ENCODE measurements at regions of chr20 and their contacts with region 1.

Region 1: GRCh38 chr20:39081255-39081654 is 119.1 kb downstream of the DHX35 start:
- DNase-seq: peak; percentile 62
- H3K4me3 ChIP-seq: no peak overlapping the region
- H3K27ac ChIP-seq: no peak overlapping the region
- H3K27me3 ChIP-seq: peaks cover 11% of the 10 kb centered on the region
- CTCF ChIP-seq: peak; percentile 97

Region 2: GRCh38 chr20:39070484-39071231 is 10.6 kb before region 1 on chr20:
- CTCF ChIA-PET with region 1: interaction called, 23 read pairs
- POLR2A ChIA-PET with region 1: no interaction called
- DNase-seq: no peak
- H3K4me3 ChIP-seq: no peak overlapping the region
- H3K27ac ChIP-seq: no peak overlapping the region
- H3K27me3 ChIP-seq: no peaks in the 10 kb centered on the region
- CTCF ChIP-seq: no peak

Region 3: GRCh38 chr20:39358052-39358451 is 276.8 kb after region 1 on chr20:
- CTCF ChIA-PET with region 1: no interaction called
- POLR2A ChIA-PET with region 1: no interaction called
- DNase-seq: no peak
- H3K4me3 ChIP-seq: no peak overlapping the region
- H3K27ac ChIP-seq: no peak overlapping the region
- H3K27me3 ChIP-seq: no peaks in the 10 kb centered on the region
- CTCF ChIP-seq: no peak

Measured in AG04450 (cell line).